T-cell (primary cell): ENCODE measurements at regions of chr6 and their contacts with region 1.

Region 1: DNA sequence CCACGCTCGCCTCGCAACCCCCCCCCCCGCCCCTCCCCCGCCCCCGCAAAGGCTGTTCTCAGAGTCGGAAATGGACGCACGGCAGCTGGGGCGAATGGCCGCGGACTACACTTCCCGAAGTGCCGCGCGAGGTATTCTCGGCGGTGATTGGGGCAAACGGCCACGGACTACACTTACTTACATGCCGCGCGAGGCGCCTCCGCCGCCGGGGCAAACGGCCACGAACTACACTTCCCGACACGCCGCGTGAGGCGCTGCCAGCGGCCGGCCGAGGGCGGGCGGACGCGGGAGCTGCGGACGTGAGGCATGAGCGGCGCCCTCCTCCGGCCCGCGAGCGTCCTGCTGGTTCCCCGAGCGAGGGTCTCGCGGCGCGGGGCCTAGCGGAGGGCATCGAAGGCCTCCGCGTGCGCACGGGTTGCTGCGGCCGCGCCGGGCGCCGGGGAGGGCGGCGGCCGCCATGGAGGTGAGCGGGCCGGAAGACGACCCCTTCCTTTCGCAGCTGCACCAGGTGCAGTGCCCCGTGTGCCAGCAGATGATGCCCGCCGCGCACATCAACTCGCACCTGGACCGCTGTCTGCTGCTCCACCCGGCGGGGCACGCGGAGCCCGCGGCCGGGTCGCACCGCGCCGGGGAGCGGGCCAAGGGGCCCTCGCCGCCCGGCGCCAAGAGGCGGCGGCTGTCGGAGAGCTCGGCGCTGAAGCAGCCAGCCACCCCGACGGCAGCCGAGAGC is at the start of gene WRNIP1:
- DNase-seq: peak; percentile 92 to 98 (median 97)
- ATAC-seq: peak; percentile 89 to 91 (median 89)
- H3K4me3 ChIP-seq: peak within 1 kb of the TSS; percentile 75 to 76
- H3K4me3 Mint-ChIP-seq: peak within 1 kb of the TSS; percentile 88 to 93 (median 90)
- H3K27ac ChIP-seq: peak within 1 kb of the TSS; percentile 98
- H3K27ac Mint-ChIP-seq: peak within 1 kb of the TSS; percentile 98
- H3K4me1 ChIP-seq: peaks cover 25 to 29% of the 10 kb centered on the region in 2 experiments
- H3K4me1 Mint-ChIP-seq: peaks cover 48 to 51% (median 50%) of the 10 kb centered on the region in 3 donors
- H3K27me3 ChIP-seq: no peaks in the 10 kb centered on the region
- H3K27me3 Mint-ChIP-seq: no peaks in the 10 kb centered on the region
- total RNA-seq, gene WRNIP1: 30.1 to 46.1 (median 41.1) TPM

Region 2: DNA sequence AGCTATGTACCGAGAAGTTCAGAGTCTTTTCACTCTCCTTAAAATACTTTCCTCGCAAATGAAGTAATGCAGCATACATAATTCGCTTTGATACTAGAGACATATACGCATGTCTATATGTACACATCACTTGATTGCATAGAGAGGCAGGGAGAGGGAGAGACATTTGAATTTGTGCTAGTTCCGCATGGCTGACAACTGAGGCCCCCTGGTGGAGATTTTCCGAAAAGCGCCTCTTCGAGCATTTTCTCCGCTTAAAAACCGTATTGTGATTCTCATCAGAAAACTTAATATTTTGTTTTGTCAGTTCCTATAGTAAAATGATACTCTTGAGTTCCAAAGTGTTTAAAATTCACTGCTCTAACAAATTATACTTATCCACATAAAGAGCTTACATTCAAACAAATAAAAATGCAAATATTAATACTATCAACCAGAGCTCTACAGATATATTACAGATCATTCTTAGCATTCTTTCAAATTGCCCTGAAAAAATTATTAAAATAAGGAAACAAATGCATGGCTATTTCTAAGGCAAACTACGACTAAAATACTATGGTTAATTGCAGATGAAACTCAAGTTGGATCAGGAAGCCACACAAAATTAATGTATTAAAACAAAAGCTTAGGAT is 15.2 kb before region 1 on chr6:
- CTCF ChIA-PET with region 1: interaction called, 6 to 10 read pairs
- POLR2A ChIA-PET with region 1: no interaction called
- DNase-seq: peak in 34 of 35 experiments; percentile 29 to 80 (median 58)
- ATAC-seq: peak; percentile 46 to 70 (median 65)
- H3K4me3 ChIP-seq: no peak overlapping the region
- H3K4me3 Mint-ChIP-seq: no peak overlapping the region
- H3K27ac ChIP-seq: no peak overlapping the region
- H3K27ac Mint-ChIP-seq: no peak overlapping the region
- H3K4me1 ChIP-seq: peaks cover 0 to 2% of the 10 kb centered on the region in 2 experiments
- H3K4me1 Mint-ChIP-seq: peaks cover 5 to 9% (median 8%) of the 10 kb centered on the region in 3 donors
- H3K27me3 ChIP-seq: no peaks in the 10 kb centered on the region
- H3K27me3 Mint-ChIP-seq: peaks cover 14 to 23% of the 10 kb centered on the region in 2 donors

Region 3: DNA sequence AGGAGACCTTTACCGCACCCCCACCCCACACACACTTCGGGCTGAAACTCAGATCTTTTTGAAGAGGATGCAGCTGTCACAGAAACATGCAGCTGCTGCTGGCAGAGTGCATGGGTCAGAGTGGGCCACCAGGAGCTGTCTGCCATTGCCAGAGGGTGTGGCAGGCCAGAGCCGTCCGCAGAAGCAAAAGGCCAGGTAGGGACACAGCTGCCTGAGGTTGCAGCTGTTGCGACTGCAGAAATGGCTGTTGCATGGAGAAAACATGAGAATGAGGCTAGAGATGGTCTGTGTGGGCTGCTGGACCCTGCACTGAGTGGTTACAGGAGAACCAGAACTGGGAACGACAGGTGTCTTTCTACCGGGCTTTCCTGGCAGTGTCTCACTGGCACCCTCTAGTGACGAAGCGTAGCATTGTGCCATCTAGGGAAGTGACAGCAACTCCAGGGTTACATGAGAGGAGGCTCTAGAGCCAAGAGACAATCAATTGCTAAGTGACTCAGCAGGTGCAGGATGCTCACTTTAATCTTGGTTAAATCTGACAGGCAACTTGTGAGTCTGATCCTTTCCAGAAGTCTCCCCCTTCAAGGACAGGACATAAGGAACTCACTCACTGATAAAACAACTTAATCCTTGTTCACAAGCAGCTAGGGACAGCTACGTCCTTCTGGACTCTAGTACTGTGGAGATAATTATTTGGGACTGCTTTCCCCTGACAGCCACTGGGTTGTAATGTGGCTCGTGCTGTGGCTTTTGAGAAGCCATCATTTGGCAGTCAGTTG is 166.8 kb after region 1 on chr6:
- CTCF ChIA-PET with region 1: interaction called in 1 of 2 experiments, 4 read pairs
- POLR2A ChIA-PET with region 1: interaction called in 1 of 2 experiments, 10 read pairs
- DNase-seq: peak; percentile 63 to 92 (median 77)
- ATAC-seq: peak; percentile 82 to 99 (median 94)
- H3K4me3 ChIP-seq: no peak overlapping the region
- H3K4me3 Mint-ChIP-seq: peak overlapping the region in 1 of 3 donors; percentile 58
- H3K27ac ChIP-seq: no peak overlapping the region
- H3K27ac Mint-ChIP-seq: peak overlapping the region; percentile 48 to 84
- H3K4me1 ChIP-seq: peaks cover 14 to 18% of the 10 kb centered on the region in 2 experiments
- H3K4me1 Mint-ChIP-seq: peaks cover 18 to 24% (median 23%) of the 10 kb centered on the region in 3 donors
- H3K27me3 ChIP-seq: no peaks in the 10 kb centered on the region
- H3K27me3 Mint-ChIP-seq: no peaks in the 10 kb centered on the region